CD4-positive, alpha-beta memory T cell (primary cell): ENCODE measurements at regions of chr1 and their contacts with region 1.

Region 1: GRCh38 chr1:235866913-235867845 is 473 bp upstream of the LYST start:
- DNase-seq: peak; percentile 95 to 100 (median 99)
- H3K4me3 ChIP-seq: peak overlapping the region; percentile 72 to 86
- H3K4me3 Mint-ChIP-seq: peak overlapping the region; percentile 77 to 99 (median 96)
- H3K27ac ChIP-seq: peak overlapping the region; percentile 100
- H3K27ac Mint-ChIP-seq: peak overlapping the region; percentile 98 to 100 (median 99)
- H3K4me1 ChIP-seq: peaks cover 31% of the 10 kb centered on the region
- H3K4me1 Mint-ChIP-seq: peaks cover 26 to 60% (median 40%) of the 10 kb centered on the region in 4 donors
- H3K27me3 ChIP-seq: no peaks in the 10 kb centered on the region
- H3K27me3 Mint-ChIP-seq: no peaks in the 10 kb centered on the region

Region 2: DNA sequence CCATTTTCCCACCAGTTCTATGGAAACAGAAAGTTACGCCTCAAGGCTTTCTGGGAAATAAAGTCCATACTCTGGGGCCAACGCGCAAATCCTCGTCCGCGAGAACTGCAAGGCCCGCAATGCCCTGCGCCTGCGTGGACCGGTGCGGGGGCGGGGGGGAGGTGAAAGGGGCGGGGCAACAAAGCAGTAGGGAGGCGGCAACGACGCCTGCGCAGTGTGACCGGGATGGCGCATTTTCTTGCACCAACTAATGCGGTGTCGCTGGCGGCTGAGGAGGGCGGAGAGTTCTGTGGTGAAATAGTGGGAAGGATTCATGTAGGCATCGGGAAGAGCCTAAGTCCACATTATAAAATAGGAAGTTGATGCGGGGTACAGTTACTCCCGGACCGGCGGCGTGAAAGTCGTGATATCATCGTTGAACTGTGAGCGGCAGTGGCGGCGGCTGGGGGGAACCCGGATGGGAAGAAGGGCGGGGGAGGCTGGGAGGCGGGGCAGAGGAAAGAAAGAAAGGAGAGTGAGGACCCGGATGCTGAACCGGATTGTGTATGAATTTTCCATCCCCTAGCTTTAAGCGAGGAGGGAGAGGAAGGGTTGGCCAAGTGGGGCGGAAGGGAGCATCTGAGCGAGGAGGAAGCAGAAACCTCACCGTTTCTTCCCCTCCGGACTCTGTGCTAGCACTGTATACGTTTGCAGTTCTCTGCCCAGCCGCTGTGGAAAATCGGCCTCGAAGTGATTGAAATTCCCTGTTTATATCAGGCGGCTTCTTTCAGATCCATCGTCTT is 538.6 kb before region 1 on chr1 and contains the start of gene GGPS1:
- CTCF ChIA-PET with region 1: no interaction called
- POLR2A ChIA-PET with region 1: no interaction called
- intact Hi-C with region 1: loop called (anchors 1 kb)
- DNase-seq: peak; percentile 95 to 99 (median 98)
- H3K4me3 ChIP-seq: peak within 1 kb of the TSS; percentile 88 to 93
- H3K4me3 Mint-ChIP-seq: no peak within 1 kb of the TSS
- H3K27ac ChIP-seq: peak within 1 kb of the TSS; percentile 99
- H3K27ac Mint-ChIP-seq: peak within 1 kb of the TSS in 3 of 7 donors; percentile 90 to 93 (median 90)
- H3K4me1 ChIP-seq: peaks cover 73% of the 10 kb centered on the region
- H3K4me1 Mint-ChIP-seq: peaks cover 32 to 39% (median 35%) of the 10 kb centered on the region in 4 donors
- H3K27me3 ChIP-seq: no peaks in the 10 kb centered on the region
- H3K27me3 Mint-ChIP-seq: no peaks in the 10 kb centered on the region
- total RNA-seq, gene GGPS1: 50.3 to 52.5 TPM

Region 3: GRCh38 chr1:235648954-235649367 is 218.2 kb before region 1 on chr1:
- CTCF ChIA-PET with region 1: no interaction called
- POLR2A ChIA-PET with region 1: no interaction called
- intact Hi-C with region 1: loop called (anchors 5 kb)
- DNase-seq: peak; percentile 50 to 79 (median 67)
- H3K4me3 ChIP-seq: peak overlapping the region in 1 of 2 donors; percentile 32
- H3K4me3 Mint-ChIP-seq: peak overlapping the region; percentile 84 to 93 (median 88)
- H3K27ac ChIP-seq: no peak overlapping the region
- H3K27ac Mint-ChIP-seq: peak overlapping the region in 6 of 7 donors; percentile 20 to 94 (median 88)
- H3K4me1 ChIP-seq: peaks cover 20% of the 10 kb centered on the region
- H3K4me1 Mint-ChIP-seq: peaks cover 6 to 28% (median 17%) of the 10 kb centered on the region in 4 donors
- H3K27me3 ChIP-seq: peaks cover 23% of the 10 kb centered on the region
- H3K27me3 Mint-ChIP-seq: peaks cover 30 to 37% of the 10 kb centered on the region in 2 donors

Region 4: DNA sequence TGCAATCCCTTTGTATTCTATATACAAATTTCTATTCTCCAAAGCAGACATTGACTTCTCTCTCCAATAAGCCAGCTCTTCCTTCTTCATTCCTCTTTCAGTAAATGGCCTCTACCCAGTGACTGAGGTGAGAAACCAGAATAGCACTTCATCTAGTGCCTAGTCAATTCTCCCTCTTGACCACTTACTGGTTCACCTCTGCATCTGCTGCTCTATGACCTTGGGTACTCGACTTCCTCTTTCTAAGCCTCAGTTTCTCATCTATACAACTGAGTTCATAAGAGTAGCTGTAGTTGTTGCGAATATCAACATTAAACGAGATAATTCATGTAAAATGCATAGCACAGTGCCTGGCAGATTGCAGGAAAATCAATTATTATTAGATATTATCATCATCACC is 12.8 kb before region 1 on chr1:
- CTCF ChIA-PET with region 1: interaction called, 10 read pairs
- POLR2A ChIA-PET with region 1: interaction called, 16 read pairs
- intact Hi-C with region 1: no loop called
- DNase-seq: no peak
- H3K4me3 ChIP-seq: no peak overlapping the region
- H3K4me3 Mint-ChIP-seq: no peak overlapping the region
- H3K27ac ChIP-seq: no peak overlapping the region
- H3K27ac Mint-ChIP-seq: peak overlapping the region in 1 of 7 donors; percentile 54
- H3K4me1 ChIP-seq: peaks cover 10% of the 10 kb centered on the region
- H3K4me1 Mint-ChIP-seq: peaks cover 23 to 45% (median 30%) of the 10 kb centered on the region in 4 donors
- H3K27me3 ChIP-seq: no peaks in the 10 kb centered on the region
- H3K27me3 Mint-ChIP-seq: no peaks in the 10 kb centered on the region

Region 5: DNA sequence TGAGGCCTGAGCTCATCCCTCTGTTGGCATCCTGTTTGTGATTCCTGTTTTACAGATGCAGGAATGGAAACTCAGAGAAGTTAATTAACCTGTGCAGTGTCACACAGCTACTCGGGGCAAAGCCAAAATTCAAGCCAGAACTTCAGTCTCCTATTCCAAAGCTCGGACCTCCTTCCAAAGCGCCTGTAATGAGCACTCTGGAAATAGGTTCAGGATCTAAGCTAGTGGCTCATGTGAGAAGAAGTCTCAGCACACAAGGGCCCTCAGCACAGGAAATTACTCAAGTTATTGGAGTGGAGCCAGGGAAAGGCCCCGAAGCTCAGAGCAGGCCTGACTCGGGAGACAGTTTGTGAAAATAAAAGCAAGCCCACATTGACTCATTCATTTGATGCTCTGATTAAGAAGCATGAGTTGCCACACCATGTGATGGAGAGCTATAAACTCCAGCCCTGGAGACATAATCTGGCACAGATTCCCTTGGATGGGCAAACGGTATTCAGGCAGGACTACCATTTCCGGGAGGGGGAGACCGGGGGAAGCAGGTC is 50.2 kb after region 1 on chr1:
- CTCF ChIA-PET with region 1: interaction called, 15 read pairs
- POLR2A ChIA-PET with region 1: interaction called, 11 read pairs
- intact Hi-C with region 1: loop called (anchors 1 kb)
- DNase-seq: peak; percentile 51 to 84 (median 65)
- H3K4me3 ChIP-seq: no peak overlapping the region
- H3K4me3 Mint-ChIP-seq: peak overlapping the region in 4 of 8 donors; percentile 7 to 72 (median 28)
- H3K27ac ChIP-seq: peak overlapping the region; percentile 3
- H3K27ac Mint-ChIP-seq: peak overlapping the region; percentile 66 to 95 (median 90)
- H3K4me1 ChIP-seq: peaks cover 9% of the 10 kb centered on the region
- H3K4me1 Mint-ChIP-seq: peaks cover 17 to 34% (median 19%) of the 10 kb centered on the region in 4 donors
- H3K27me3 ChIP-seq: no peaks in the 10 kb centered on the region
- H3K27me3 Mint-ChIP-seq: no peaks in the 10 kb centered on the region

Region 6: DNA sequence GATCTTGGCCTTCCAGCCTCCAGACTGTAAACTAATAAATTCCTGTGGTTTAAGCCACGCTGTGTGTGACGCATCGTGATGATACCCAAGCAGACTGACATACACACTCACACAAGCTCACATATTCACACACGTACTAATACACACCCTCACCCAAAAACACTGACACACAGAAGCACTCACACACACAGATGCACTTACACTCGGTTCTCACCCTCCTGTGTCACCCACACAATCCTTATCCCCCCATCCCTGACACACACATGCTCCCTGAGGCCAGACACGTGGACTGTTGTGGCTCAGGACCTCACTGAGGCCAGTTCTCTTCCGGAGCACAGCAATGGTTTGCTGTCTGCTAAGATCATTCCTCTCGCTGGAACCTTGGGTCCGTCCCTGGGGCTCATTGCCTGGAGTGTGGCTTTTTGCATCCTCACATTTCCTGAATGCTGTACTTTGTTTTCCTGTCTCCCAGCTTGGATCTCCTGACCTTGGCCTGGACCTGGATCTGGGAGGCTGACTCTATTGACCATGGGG is 76.5 kb after region 1 on chr1:
- CTCF ChIA-PET with region 1: interaction called, 15 read pairs
- POLR2A ChIA-PET with region 1: interaction called, 3 read pairs
- intact Hi-C with region 1: no loop called
- DNase-seq: no peak
- H3K4me3 ChIP-seq: no peak overlapping the region
- H3K4me3 Mint-ChIP-seq: peak overlapping the region in 1 of 8 donors; percentile 4
- H3K27ac ChIP-seq: no peak overlapping the region
- H3K27ac Mint-ChIP-seq: peak overlapping the region in 1 of 7 donors; percentile 22
- H3K4me1 ChIP-seq: peaks cover 11% of the 10 kb centered on the region
- H3K4me1 Mint-ChIP-seq: peaks cover 10 to 21% (median 15%) of the 10 kb centered on the region in 4 donors
- H3K27me3 ChIP-seq: no peaks in the 10 kb centered on the region
- H3K27me3 Mint-ChIP-seq: peaks cover 0 to 3% of the 10 kb centered on the region in 2 donors

Region 7: GRCh38 chr1:235986869-235987268 is 119.7 kb after region 1 on chr1:
- CTCF ChIA-PET with region 1: no interaction called
- POLR2A ChIA-PET with region 1: no interaction called
- intact Hi-C with region 1: no loop called
- DNase-seq: no peak
- H3K4me3 ChIP-seq: no peak overlapping the region
- H3K4me3 Mint-ChIP-seq: no peak overlapping the region
- H3K27ac ChIP-seq: no peak overlapping the region
- H3K27ac Mint-ChIP-seq: no peak overlapping the region
- H3K4me1 ChIP-seq: no peaks in the 10 kb centered on the region
- H3K4me1 Mint-ChIP-seq: no peaks in the 10 kb centered on the region
- H3K27me3 ChIP-seq: no peaks in the 10 kb centered on the region
- H3K27me3 Mint-ChIP-seq: no peaks in the 10 kb centered on the region

Region 8: GRCh38 chr1:235999259-235999925 is 132.2 kb after region 1 on chr1:
- CTCF ChIA-PET with region 1: interaction called, 5 read pairs
- POLR2A ChIA-PET with region 1: interaction called, 17 read pairs
- intact Hi-C with region 1: loop called (anchors 1 kb)
- DNase-seq: peak; percentile 81 to 95 (median 83)
- H3K4me3 ChIP-seq: peak overlapping the region in 1 of 2 donors; percentile 15
- H3K4me3 Mint-ChIP-seq: peak overlapping the region; percentile 26 to 88 (median 73)
- H3K27ac ChIP-seq: peak overlapping the region; percentile 90
- H3K27ac Mint-ChIP-seq: peak overlapping the region; percentile 88 to 100 (median 99)
- H3K4me1 ChIP-seq: peaks cover 53% of the 10 kb centered on the region
- H3K4me1 Mint-ChIP-seq: peaks cover 37 to 58% (median 49%) of the 10 kb centered on the region in 4 donors
- H3K27me3 ChIP-seq: no peaks in the 10 kb centered on the region
- H3K27me3 Mint-ChIP-seq: no peaks in the 10 kb centered on the region